Endothelial cell of umbilical vein (primary cell): ENCODE measurements at regions of chr3 and their contacts with region 1.

Region 1: GRCh38 chr3:32018757-32019564 is 37.4 kb downstream of the ZNF860 start:
- DNase-seq: peak; percentile 63
- H3K4me3 ChIP-seq: no peak overlapping the region
- H3K27ac ChIP-seq: no peak overlapping the region
- H3K4me1 ChIP-seq: no peaks in the 10 kb centered on the region
- H3K27me3 ChIP-seq: peaks cover 0 to 3% of the 10 kb centered on the region in 2 experiments
- CTCF ChIP-seq: peak; percentile 58 to 62
- POLR2A ChIP-seq: no peak

Region 2: GRCh38 chr3:31610700-31611275 is 408.2 kb before region 1 on chr3:
- CTCF ChIA-PET with region 1: interaction called, 7 read pairs
- POLR2A ChIA-PET with region 1: no interaction called
- dilution Hi-C with region 1: no loop called
- intact Hi-C with region 1: loop called (anchors 5 kb)
- DNase-seq: peak; percentile 70
- H3K4me3 ChIP-seq: no peak overlapping the region
- H3K27ac ChIP-seq: no peak overlapping the region
- H3K4me1 ChIP-seq: no peaks in the 10 kb centered on the region
- H3K27me3 ChIP-seq: no peaks in the 10 kb centered on the region
- CTCF ChIP-seq: peak; percentile 31 to 40
- POLR2A ChIP-seq: no peak

Region 3: GRCh38 chr3:31802981-31803740 is 215.8 kb before region 1 on chr3:
- CTCF ChIA-PET with region 1: no interaction called
- POLR2A ChIA-PET with region 1: no interaction called
- dilution Hi-C with region 1: no loop called
- intact Hi-C with region 1: no loop called
- DNase-seq: no peak
- H3K4me3 ChIP-seq: no peak overlapping the region
- H3K27ac ChIP-seq: no peak overlapping the region
- H3K4me1 ChIP-seq: no peaks in the 10 kb centered on the region
- H3K27me3 ChIP-seq: no peaks in the 10 kb centered on the region
- CTCF ChIP-seq: no peak
- POLR2A ChIP-seq: no peak

Region 4: GRCh38 chr3:31936420-31937060 is 82.4 kb before region 1 on chr3:
- CTCF ChIA-PET with region 1: no interaction called
- POLR2A ChIA-PET with region 1: no interaction called
- dilution Hi-C with region 1: no loop called
- intact Hi-C with region 1: no loop called
- DNase-seq: peak; percentile 33
- H3K4me3 ChIP-seq: no peak overlapping the region
- H3K27ac ChIP-seq: no peak overlapping the region
- H3K4me1 ChIP-seq: peaks cover 11% of the 10 kb centered on the region
- H3K27me3 ChIP-seq: no peaks in the 10 kb centered on the region
- CTCF ChIP-seq: no peak
- POLR2A ChIP-seq: no peak

Region 5: DNA sequence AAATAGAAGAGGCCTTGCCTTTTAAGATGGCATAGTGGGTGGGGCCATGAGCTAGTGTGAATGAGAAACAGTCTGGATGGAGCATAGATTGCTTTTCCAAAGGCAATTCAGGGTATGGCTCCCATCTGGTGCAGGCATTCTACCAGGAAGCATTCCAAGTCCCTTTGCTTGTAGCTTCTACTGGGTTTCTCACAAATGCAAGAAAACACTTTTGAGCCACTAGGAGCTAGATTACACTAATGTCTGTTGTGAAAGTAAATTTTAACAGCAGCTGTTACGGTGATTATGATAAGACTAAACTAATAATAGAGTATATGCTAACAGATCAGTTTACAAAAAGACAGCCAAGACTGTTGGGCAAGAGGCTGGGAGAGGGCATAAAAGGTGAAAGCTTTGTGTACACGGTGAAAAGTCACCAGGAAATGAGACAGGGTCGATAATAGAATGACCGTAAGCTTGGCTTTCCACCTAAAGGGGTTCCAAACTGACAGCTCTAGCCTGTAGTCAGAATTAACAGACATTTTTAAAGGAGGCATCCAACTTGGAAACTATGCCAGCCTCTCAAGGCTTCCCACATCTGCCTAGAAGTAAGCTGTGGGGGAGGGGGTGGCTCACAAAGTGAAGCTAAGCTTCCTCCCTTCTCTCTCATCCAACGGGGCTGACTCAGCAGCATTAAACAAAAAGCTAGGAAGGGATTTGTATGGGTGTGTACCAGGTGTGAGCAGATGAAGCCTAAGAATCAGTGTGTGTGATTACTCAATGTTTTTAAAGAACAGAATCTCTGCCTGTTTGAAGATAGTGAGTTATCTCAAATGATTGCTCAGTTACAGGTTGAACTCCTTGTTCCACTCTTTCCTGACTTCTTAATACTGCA is 26.4 kb after region 1 on chr3:
- CTCF ChIA-PET with region 1: interaction called, 12 read pairs
- POLR2A ChIA-PET with region 1: no interaction called
- dilution Hi-C with region 1: no loop called
- intact Hi-C with region 1: no loop called
- DNase-seq: peak; percentile 74
- H3K4me3 ChIP-seq: no peak overlapping the region
- H3K27ac ChIP-seq: no peak overlapping the region
- H3K4me1 ChIP-seq: peaks cover 7% of the 10 kb centered on the region
- H3K27me3 ChIP-seq: no peaks in the 10 kb centered on the region
- CTCF ChIP-seq: no peak
- POLR2A ChIP-seq: no peak

Region 6: GRCh38 chr3:32138545-32139104 is 119.7 kb after region 1 on chr3:
- CTCF ChIA-PET with region 1: interaction called, 136 read pairs
- POLR2A ChIA-PET with region 1: interaction called, 5 read pairs
- dilution Hi-C with region 1: no loop called
- intact Hi-C with region 1: no loop called
- DNase-seq: peak; percentile 80
- H3K4me3 ChIP-seq: no peak overlapping the region
- H3K27ac ChIP-seq: no peak overlapping the region
- H3K4me1 ChIP-seq: peaks cover 28% of the 10 kb centered on the region
- H3K27me3 ChIP-seq: no peaks in the 10 kb centered on the region
- CTCF ChIP-seq: no peak
- POLR2A ChIP-seq: no peak

Region 7: DNA sequence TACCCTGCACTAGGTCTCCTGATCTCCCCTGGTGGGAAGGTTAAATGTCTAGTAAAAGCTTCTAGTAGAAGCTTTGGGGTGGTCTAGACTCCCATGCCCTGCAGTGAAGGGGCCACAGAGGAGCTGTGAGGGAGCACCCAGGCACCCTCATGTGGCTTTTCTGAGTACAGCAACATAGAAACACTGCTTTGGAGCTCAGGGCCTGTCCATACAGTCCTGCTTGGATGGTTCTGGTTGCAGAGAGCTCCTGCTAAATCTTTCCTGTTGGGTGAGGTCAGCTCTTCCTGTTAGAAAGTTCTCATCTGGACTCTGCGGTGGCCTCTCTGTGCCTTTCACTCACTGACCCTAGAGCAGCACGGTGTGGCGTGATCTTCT is 135.2 kb after region 1 on chr3:
- CTCF ChIA-PET with region 1: interaction called, 62 read pairs
- POLR2A ChIA-PET with region 1: no interaction called
- dilution Hi-C with region 1: no loop called
- intact Hi-C with region 1: no loop called
- DNase-seq: no peak
- H3K4me3 ChIP-seq: no peak overlapping the region
- H3K27ac ChIP-seq: no peak overlapping the region
- H3K4me1 ChIP-seq: no peaks in the 10 kb centered on the region
- H3K27me3 ChIP-seq: no peaks in the 10 kb centered on the region
- CTCF ChIP-seq: peak; percentile 27 to 39
- POLR2A ChIP-seq: no peak